ENCODE measurements at regions of chr15 and their contacts with region 1.

Region 1: GRCh38 chr15:83559310-83559966 is 94.5 kb upstream of the ADAMTSL3 start:
- DNase-seq: no peak
- ATAC-seq: peak; percentile 77

Region 2: GRCh38 chr15:83436458-83437158 is 122.8 kb before region 1 on chr15:
- intact Hi-C with region 1: loop called (anchors 2 kb)
- DNase-seq: no peak
- ATAC-seq: no peak

Region 3: DNA sequence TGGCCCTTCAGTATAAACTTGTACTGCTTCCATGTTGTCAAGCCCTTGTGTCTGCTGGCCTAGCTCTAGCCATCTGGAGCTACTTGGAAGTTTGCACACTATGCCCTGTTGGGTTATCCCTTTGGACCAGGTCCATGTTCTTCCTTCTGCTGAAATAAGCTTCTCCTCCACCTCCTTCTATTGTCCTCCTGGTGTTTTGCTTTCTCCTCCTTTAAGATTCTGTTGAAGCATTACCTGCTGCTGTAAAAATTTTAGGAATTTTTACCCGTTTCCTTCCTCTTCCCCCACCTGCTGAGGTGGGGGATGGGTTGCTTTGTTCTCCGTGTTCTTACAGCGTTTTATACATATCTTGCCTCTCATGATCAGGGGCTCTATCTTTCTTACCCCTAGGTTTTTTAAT is 60.6 kb before region 1 on chr15:
- intact Hi-C with region 1: no loop called
- DNase-seq: no peak
- ATAC-seq: no peak

Measured in Right ventricle myocardium superior (tissue), 1 donor.